ENCODE measurements at regions of chr12 and their contacts with region 1.

Region 1: DNA sequence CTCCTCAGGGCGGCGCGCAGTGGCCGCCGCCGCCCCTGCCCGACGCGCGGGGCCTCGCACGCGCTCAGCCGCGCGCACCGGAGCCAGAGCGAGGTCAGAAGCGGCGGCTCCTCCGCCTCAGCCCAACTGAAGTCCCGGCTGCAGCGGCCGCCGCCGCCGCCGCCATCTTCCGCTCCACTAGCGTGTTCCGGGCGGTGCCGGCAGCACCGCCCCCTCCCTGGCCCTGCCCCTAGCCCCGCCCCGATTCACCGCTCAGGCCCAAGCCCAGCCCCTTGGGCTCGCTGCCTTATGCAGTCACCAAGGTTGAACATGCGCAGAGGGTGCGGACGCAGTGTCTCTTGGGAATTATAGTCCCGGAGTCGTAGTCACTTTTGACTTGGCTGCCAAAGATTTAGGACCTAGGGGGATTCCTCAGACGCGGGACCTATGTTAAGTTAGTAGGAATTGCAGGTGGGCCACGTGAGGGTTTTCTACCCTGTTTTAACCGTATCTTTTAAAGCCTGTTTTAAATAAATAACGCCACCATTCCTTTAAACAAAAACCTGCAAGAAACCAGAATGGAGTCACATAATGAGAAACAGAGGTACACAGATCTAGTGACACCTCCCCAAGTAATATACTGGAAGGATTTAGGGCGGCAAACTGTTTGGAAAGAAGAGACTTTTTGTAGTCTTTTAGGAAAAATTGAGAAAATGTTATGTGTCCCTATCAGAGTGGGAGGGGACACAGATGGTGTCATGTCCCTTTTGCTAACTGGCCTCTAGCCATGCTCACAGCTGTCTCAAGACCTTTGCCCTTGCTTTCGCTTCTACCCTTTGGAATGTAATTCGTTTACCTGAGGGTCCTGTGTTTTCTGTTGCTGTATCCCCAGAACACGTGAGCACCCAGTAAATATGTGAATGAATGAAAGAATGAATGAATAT is at the start of gene PPTC7:
- DNase-seq: peak; percentile 94 to 98 (median 97)
- ATAC-seq: peak; percentile 94
- H3K4me3 ChIP-seq: peak within 1 kb of the TSS; percentile 77 to 94
- H3K4me3 Mint-ChIP-seq: peak within 1 kb of the TSS; percentile 88
- H3K27ac ChIP-seq: peak within 1 kb of the TSS; percentile 63 to 87
- H3K27ac Mint-ChIP-seq: peak within 1 kb of the TSS; percentile 86
- H3K4me1 ChIP-seq: peaks cover 60% of the 10 kb centered on the region
- H3K4me1 Mint-ChIP-seq: peaks cover 61% of the 10 kb centered on the region
- H3K27me3 ChIP-seq: no peaks in the 10 kb centered on the region
- H3K27me3 Mint-ChIP-seq: no peaks in the 10 kb centered on the region
- CTCF ChIP-seq: no peak
- total RNA-seq, gene PPTC7: 49.6 to 50.4 TPM

Region 2: GRCh38 chr12:110280779-110281548 is 302.4 kb before region 1 on chr12 and contains the start of gene ATP2A2:
- CTCF ChIA-PET with region 1: no interaction called
- POLR2A ChIA-PET with region 1: no interaction called
- intact Hi-C with region 1: loop called (anchors 1 to 10 kb)
- DNase-seq: peak; percentile 75 to 97 (median 90)
- ATAC-seq: peak; percentile 89
- H3K4me3 ChIP-seq: peak within 1 kb of the TSS; percentile 60 to 82
- H3K4me3 Mint-ChIP-seq: peak within 1 kb of the TSS; percentile 91
- H3K27ac ChIP-seq: peak within 1 kb of the TSS; percentile 70 to 77
- H3K27ac Mint-ChIP-seq: peak within 1 kb of the TSS; percentile 94
- H3K4me1 ChIP-seq: peaks cover 35% of the 10 kb centered on the region
- H3K4me1 Mint-ChIP-seq: peaks cover 46% of the 10 kb centered on the region
- H3K27me3 ChIP-seq: no peaks in the 10 kb centered on the region
- H3K27me3 Mint-ChIP-seq: no peaks in the 10 kb centered on the region
- CTCF ChIP-seq: no peak
- total RNA-seq, gene ATP2A2: 100 to 105 TPM

Region 3: DNA sequence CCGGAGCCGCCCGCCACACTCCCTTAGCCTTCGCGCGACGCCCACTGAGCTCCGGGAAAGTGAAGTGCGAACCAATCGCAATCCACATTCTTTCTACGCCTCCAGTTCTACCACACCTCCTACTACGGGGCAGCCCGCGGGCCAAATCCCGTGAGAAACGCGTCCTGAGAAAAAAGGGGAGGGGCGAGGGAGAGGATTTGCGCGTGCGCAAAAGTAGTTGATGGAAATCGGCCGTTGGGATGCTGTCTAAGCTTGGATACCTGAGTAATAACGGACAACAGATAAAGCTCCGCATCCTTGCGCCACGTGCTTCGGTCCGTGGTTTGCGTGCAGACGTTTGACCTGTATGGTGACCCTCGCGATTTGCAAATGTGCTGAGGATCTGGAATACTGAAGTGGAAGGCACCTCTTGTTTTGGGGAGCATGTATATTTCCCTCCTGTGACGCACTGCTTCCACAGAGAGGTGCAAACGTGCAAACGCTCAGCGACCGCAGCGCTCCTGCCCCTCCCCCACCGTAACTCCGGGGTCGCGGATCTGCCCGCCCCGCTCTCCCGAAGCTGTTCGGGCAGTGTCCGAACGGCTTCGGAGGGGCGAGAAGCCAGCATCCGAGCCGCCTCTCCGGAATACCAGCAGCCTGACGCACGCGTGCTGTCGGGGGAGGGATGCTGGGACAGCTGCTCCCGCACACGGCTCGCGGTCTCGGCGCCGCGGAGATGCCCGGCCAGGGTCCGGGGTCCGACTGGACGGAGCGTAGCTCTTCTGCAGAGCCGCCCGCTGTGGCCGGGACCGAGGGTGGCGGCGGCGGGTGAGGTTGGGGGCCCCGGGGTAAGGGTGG is 115.0 kb before region 1 on chr12 and contains the starts of genes FAM216A and GPN3:
- CTCF ChIA-PET with region 1: interaction called, 3 read pairs
- POLR2A ChIA-PET with region 1: interaction called, 8 read pairs
- intact Hi-C with region 1: loop called (anchors 1 kb)
- DNase-seq: peak; percentile 89 to 98 (median 95)
- ATAC-seq: peak; percentile 89
- H3K4me3 ChIP-seq: peak within 1 kb of the TSS; percentile 90 to 96
- H3K4me3 Mint-ChIP-seq: peak within 1 kb of the TSS; percentile 99
- H3K27ac ChIP-seq: peak within 1 kb of the TSS; percentile 74 to 87
- H3K27ac Mint-ChIP-seq: peak within 1 kb of the TSS; percentile 95
- H3K4me1 ChIP-seq: peaks cover 23% of the 10 kb centered on the region
- H3K4me1 Mint-ChIP-seq: peaks cover 43% of the 10 kb centered on the region
- H3K27me3 ChIP-seq: no peaks in the 10 kb centered on the region
- H3K27me3 Mint-ChIP-seq: no peaks in the 10 kb centered on the region
- CTCF ChIP-seq: no peak
- total RNA-seq, gene FAM216A: 3.5 to 4.5 TPM
- total RNA-seq, gene GPN3: 5.9 to 6.2 TPM

Region 4: GRCh38 chr12:110549716-110550115 is 33.7 kb before region 1 on chr12:
- CTCF ChIA-PET with region 1: interaction called, 22 read pairs
- POLR2A ChIA-PET with region 1: no interaction called
- intact Hi-C with region 1: loop called (anchors 1 to 2 kb)
- DNase-seq: no peak
- ATAC-seq: no peak
- H3K4me3 ChIP-seq: no peak overlapping the region
- H3K4me3 Mint-ChIP-seq: no peak overlapping the region
- H3K27ac ChIP-seq: no peak overlapping the region
- H3K27ac Mint-ChIP-seq: no peak overlapping the region
- H3K4me1 ChIP-seq: no peaks in the 10 kb centered on the region
- H3K4me1 Mint-ChIP-seq: peaks cover 30% of the 10 kb centered on the region
- H3K27me3 ChIP-seq: no peaks in the 10 kb centered on the region
- H3K27me3 Mint-ChIP-seq: no peaks in the 10 kb centered on the region
- CTCF ChIP-seq: no peak

Region 5: GRCh38 chr12:110613771-110614684 is 30.6 kb after region 1 on chr12 and contains the start of gene TCTN1:
- CTCF ChIA-PET with region 1: no interaction called
- POLR2A ChIA-PET with region 1: interaction called, 3 read pairs
- intact Hi-C with region 1: loop called (anchors 1 kb)
- DNase-seq: peak; percentile 90 to 97 (median 95)
- ATAC-seq: peak; percentile 100
- H3K4me3 ChIP-seq: peak within 1 kb of the TSS; percentile 75 to 76
- H3K4me3 Mint-ChIP-seq: peak within 1 kb of the TSS; percentile 88
- H3K27ac ChIP-seq: peak within 1 kb of the TSS; percentile 78 to 83
- H3K27ac Mint-ChIP-seq: peak within 1 kb of the TSS; percentile 85
- H3K4me1 ChIP-seq: peaks cover 5% of the 10 kb centered on the region
- H3K4me1 Mint-ChIP-seq: peaks cover 7% of the 10 kb centered on the region
- H3K27me3 ChIP-seq: no peaks in the 10 kb centered on the region
- H3K27me3 Mint-ChIP-seq: no peaks in the 10 kb centered on the region
- CTCF ChIP-seq: no peak
- total RNA-seq, gene TCTN1: 4.7 to 4.9 TPM

Region 6: DNA sequence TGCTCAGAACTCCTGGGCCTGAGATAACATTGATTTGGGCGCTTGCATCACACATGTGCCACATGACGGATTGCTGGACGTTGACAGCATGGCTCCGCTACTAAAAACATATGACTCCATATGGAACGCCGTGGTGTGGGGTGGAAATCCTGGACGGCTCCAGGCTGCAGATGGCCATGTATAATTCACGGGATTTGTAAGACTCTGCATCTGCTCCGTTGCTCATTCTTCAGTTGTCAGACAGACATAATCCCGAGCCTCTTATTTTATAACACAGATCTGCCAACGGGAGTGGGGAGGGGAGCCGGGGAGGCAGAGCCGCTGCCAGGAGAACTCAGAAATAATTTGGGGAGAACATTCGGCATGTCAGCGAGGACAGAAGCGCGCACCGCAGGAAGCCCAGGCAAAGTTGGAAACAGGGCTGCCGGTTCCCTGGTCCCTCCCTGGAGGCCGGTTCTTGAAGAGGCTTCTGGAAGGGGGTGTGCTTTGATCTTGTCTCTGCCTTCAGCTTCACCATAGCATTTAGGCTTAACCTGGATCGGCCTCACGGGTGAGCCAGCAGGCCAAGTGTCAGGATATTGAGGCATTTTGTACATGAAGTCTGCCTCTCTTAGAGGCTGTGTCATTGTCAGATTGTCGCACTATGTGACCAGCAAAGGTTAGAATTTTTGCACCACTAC is 382.8 kb after region 1 on chr12:
- CTCF ChIA-PET with region 1: no interaction called
- POLR2A ChIA-PET with region 1: no interaction called
- intact Hi-C with region 1: no loop called
- DNase-seq: no peak
- ATAC-seq: no peak
- H3K4me3 ChIP-seq: no peak overlapping the region
- H3K4me3 Mint-ChIP-seq: no peak overlapping the region
- H3K27ac ChIP-seq: no peak overlapping the region
- H3K27ac Mint-ChIP-seq: no peak overlapping the region
- H3K4me1 ChIP-seq: no peaks in the 10 kb centered on the region
- H3K4me1 Mint-ChIP-seq: no peaks in the 10 kb centered on the region
- H3K27me3 ChIP-seq: no peaks in the 10 kb centered on the region
- H3K27me3 Mint-ChIP-seq: peaks cover 18% of the 10 kb centered on the region
- CTCF ChIP-seq: no peak

Measured in CD8-positive, alpha-beta T cell (primary cell).